Activated T-helper 1 cell treated with anti-CD3 and anti-CD28 coated beads, Interleukin-12 subunit alpha, Interleukin-12 subunit beta, Interleukin-2, Interleukin-4 antibody, amounts not matched to agents 30 ng/mL and 10 ng/mL and 1 ng/mL, durations not matched to agents 14 hours and 24 hours and 36 hours (primary cell): ENCODE measurements at regions of chr11 and their contacts with region 1.

Region 1: GRCh38 chr11:134244655-134245054 is 8.5 kb downstream of the THYN1 start:
- DNase-seq: no peak
- H3K4me3 Mint-ChIP-seq: no peak overlapping the region
- H3K27ac Mint-ChIP-seq: no peak overlapping the region
- H3K4me1 Mint-ChIP-seq: peaks cover 12% of the 10 kb centered on the region
- H3K27me3 Mint-ChIP-seq: no peaks in the 10 kb centered on the region

Region 2: GRCh38 chr11:134181707-134182106 is 62.9 kb before region 1 on chr11:
- intact Hi-C with region 1: no loop called
- DNase-seq: no peak
- H3K4me3 Mint-ChIP-seq: no peak overlapping the region
- H3K27ac Mint-ChIP-seq: no peak overlapping the region
- H3K4me1 Mint-ChIP-seq: no peaks in the 10 kb centered on the region
- H3K27me3 Mint-ChIP-seq: no peaks in the 10 kb centered on the region

Region 3: GRCh38 chr11:134207538-134208239 is 37.0 kb before region 1 on chr11:
- intact Hi-C with region 1: loop called (anchors 1 kb)
- DNase-seq: peak; percentile 59
- H3K4me3 Mint-ChIP-seq: no peak overlapping the region
- H3K27ac Mint-ChIP-seq: no peak overlapping the region
- H3K4me1 Mint-ChIP-seq: peaks cover 5% of the 10 kb centered on the region
- H3K27me3 Mint-ChIP-seq: no peaks in the 10 kb centered on the region

Region 4: GRCh38 chr11:134393638-134394037 is 149.0 kb after region 1 on chr11:
- intact Hi-C with region 1: no loop called
- DNase-seq: no peak
- H3K4me3 Mint-ChIP-seq: no peak overlapping the region
- H3K27ac Mint-ChIP-seq: no peak overlapping the region
- H3K4me1 Mint-ChIP-seq: no peaks in the 10 kb centered on the region
- H3K27me3 Mint-ChIP-seq: peaks cover 9% of the 10 kb centered on the region